Caco-2 (cell line): ENCODE measurements at regions of chr10 and their contacts with region 1.

Region 1: DNA sequence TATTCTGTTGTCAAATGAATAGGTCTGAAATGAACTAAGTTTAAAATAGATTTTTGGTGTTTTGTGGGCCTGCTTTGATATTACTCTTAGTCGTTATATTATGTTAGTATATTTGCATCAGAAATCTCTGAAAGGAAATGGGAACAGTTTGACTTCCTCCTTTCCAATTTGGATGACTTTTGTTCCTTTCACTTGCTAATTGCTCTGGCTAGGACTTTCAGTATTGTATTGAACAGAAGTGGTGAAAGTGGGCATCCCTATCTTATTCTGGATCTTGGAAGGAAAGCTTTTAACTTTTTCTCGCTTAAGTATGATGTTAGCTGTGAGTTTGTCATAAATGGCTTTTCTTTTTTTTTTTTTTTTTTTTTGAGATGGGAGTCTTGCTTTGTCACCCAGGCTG is 273.6 kb upstream of the DKK1 start:
- DNase-seq: no peak
- H3K4me3 ChIP-seq: no peak overlapping the region
- H3K4me3 Mint-ChIP-seq: no peak overlapping the region
- H3K27ac Mint-ChIP-seq: no peak overlapping the region
- H3K4me1 ChIP-seq: peaks cover 32% of the 10 kb centered on the region
- H3K4me1 Mint-ChIP-seq: peaks cover 32% of the 10 kb centered on the region
- H3K27me3 ChIP-seq: no peaks in the 10 kb centered on the region
- H3K27me3 Mint-ChIP-seq: no peaks in the 10 kb centered on the region
- CTCF ChIP-seq: no peak

Region 2: GRCh38 chr10:52066383-52066782 is 25.9 kb after region 1 on chr10:
- CTCF ChIA-PET with region 1: no interaction called
- POLR2A ChIA-PET with region 1: no interaction called
- intact Hi-C with region 1: no loop called
- DNase-seq: peak in 1 of 2 experiments; percentile 47
- H3K4me3 ChIP-seq: no peak overlapping the region
- H3K4me3 Mint-ChIP-seq: no peak overlapping the region
- H3K27ac Mint-ChIP-seq: no peak overlapping the region
- H3K4me1 ChIP-seq: no peaks in the 10 kb centered on the region
- H3K4me1 Mint-ChIP-seq: no peaks in the 10 kb centered on the region
- H3K27me3 ChIP-seq: no peaks in the 10 kb centered on the region
- H3K27me3 Mint-ChIP-seq: no peaks in the 10 kb centered on the region
- CTCF ChIP-seq: peak; percentile 38 to 52

Region 3: DNA sequence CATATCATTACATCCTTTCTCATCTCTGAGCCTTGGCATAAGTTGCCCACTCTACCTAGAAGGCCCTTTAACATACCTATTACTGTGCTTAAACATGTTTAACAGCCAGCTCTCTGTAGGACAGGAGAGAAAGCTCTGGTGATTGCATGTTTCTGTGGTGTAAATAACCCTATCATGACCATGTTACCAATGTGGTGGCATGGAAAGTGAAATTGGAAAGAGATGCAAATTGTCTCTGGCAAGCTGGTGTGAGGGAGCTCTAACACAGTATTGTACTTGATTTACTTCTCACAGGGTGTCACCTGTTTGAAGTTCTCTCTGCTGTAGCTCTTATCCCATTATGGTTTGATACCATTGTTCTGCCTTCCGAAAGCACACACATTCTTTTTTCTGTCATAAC is 41.8 kb after region 1 on chr10:
- CTCF ChIA-PET with region 1: no interaction called
- POLR2A ChIA-PET with region 1: no interaction called
- intact Hi-C with region 1: no loop called
- DNase-seq: no peak
- H3K4me3 ChIP-seq: no peak overlapping the region
- H3K4me3 Mint-ChIP-seq: no peak overlapping the region
- H3K27ac Mint-ChIP-seq: no peak overlapping the region
- H3K4me1 ChIP-seq: no peaks in the 10 kb centered on the region
- H3K4me1 Mint-ChIP-seq: no peaks in the 10 kb centered on the region
- H3K27me3 ChIP-seq: no peaks in the 10 kb centered on the region
- H3K27me3 Mint-ChIP-seq: peaks cover 11% of the 10 kb centered on the region
- CTCF ChIP-seq: no peak

Region 4: GRCh38 chr10:52115823-52116222 is 75.3 kb after region 1 on chr10:
- CTCF ChIA-PET with region 1: no interaction called
- POLR2A ChIA-PET with region 1: no interaction called
- intact Hi-C with region 1: loop called (anchors 2 kb)
- DNase-seq: no peak
- H3K4me3 ChIP-seq: no peak overlapping the region
- H3K4me3 Mint-ChIP-seq: no peak overlapping the region
- H3K27ac Mint-ChIP-seq: no peak overlapping the region
- H3K4me1 ChIP-seq: peaks cover 16% of the 10 kb centered on the region
- H3K4me1 Mint-ChIP-seq: peaks cover 21% of the 10 kb centered on the region
- H3K27me3 ChIP-seq: no peaks in the 10 kb centered on the region
- H3K27me3 Mint-ChIP-seq: peaks cover 3% of the 10 kb centered on the region
- CTCF ChIP-seq: no peak